Endothelial cell of umbilical vein (primary cell): ENCODE measurements at regions of chr3 and their contacts with region 1.

Region 1: GRCh38 chr3:160163229-160163878 is 61.9 kb upstream of the C3orf80 start:
- DNase-seq: peak; percentile 46
- H3K4me3 ChIP-seq: no peak overlapping the region
- H3K27ac ChIP-seq: no peak overlapping the region
- H3K4me1 ChIP-seq: no peaks in the 10 kb centered on the region
- H3K27me3 ChIP-seq: no peaks in the 10 kb centered on the region
- CTCF ChIP-seq: peak in 1 of 2 donors; percentile 8
- POLR2A ChIP-seq: no peak

Region 2: GRCh38 chr3:160012108-160012507 is 151.2 kb before region 1 on chr3:
- CTCF ChIA-PET with region 1: no interaction called
- POLR2A ChIA-PET with region 1: no interaction called
- dilution Hi-C with region 1: no loop called
- intact Hi-C with region 1: no loop called
- DNase-seq: no peak
- H3K4me3 ChIP-seq: no peak overlapping the region
- H3K27ac ChIP-seq: no peak overlapping the region
- H3K4me1 ChIP-seq: no peaks in the 10 kb centered on the region
- H3K27me3 ChIP-seq: peaks cover 0 to 3% of the 10 kb centered on the region in 2 experiments
- CTCF ChIP-seq: no peak
- POLR2A ChIP-seq: no peak

Region 3: GRCh38 chr3:160174621-160175020 is 11.3 kb after region 1 on chr3:
- CTCF ChIA-PET with region 1: interaction called, 20 read pairs
- POLR2A ChIA-PET with region 1: no interaction called
- dilution Hi-C with region 1: no loop called
- intact Hi-C with region 1: no loop called
- DNase-seq: no peak
- H3K4me3 ChIP-seq: no peak overlapping the region
- H3K27ac ChIP-seq: no peak overlapping the region
- H3K4me1 ChIP-seq: no peaks in the 10 kb centered on the region
- H3K27me3 ChIP-seq: no peaks in the 10 kb centered on the region
- CTCF ChIP-seq: no peak
- POLR2A ChIP-seq: no peak

Region 4: DNA sequence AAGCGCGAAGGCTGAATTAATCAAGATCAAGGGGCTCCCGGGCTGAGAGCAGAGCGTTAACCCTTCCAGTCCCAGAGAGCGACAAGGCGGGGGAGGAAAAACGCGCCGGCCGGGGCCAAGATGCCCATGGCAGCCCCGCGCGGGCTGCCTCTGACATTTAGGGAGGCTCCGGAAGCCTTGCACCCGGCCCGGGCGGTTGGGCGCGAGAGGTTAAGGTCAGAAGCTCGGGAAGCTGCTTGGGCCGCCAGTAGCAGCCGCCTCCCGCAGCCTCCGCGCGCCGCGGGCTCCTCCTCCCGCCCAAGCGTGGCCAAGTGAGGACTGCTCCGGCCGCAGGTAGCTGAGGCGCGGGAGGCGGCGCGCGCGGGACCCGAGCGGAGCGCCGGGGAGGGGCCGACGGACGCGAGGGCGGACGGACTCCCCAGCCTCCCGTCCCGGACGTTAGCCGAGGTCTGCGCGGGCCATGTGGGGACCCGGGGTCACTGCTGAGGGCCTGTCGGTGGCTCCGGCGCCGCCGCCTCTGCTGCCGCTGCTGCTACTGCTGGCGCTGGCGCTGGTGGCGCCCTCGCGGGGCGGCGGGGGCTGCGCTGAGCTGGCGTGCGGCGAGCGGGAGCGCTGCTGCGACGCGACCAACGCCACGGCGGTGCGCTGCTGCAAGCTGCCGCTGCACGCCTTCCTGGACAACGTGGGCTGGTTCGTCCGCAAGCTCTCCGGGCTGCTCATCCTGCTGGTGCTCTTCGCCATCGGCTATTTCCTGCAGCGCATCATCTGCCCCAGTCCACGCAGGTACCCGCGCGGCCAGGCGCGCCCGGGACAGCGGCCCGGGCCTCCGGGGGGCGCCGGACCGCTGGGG is 62.0 kb after region 1 on chr3 and contains the start of gene C3orf80:
- CTCF ChIA-PET with region 1: interaction called, 9 read pairs
- POLR2A ChIA-PET with region 1: no interaction called
- dilution Hi-C with region 1: no loop called
- intact Hi-C with region 1: loop called (anchors 5 kb)
- DNase-seq: peak; percentile 57
- H3K4me3 ChIP-seq: peak within 1 kb of the TSS; percentile 6 to 43 (median 40)
- H3K27ac ChIP-seq: no peak within 1 kb of the TSS
- H3K4me1 ChIP-seq: peaks cover 7% of the 10 kb centered on the region
- H3K27me3 ChIP-seq: peaks cover 26 to 39% of the 10 kb centered on the region in 2 experiments
- CTCF ChIP-seq: peak in 1 of 2 donors; percentile 3
- POLR2A ChIP-seq: no peak
- total RNA-seq, gene C3orf80: not detected in 2 replicates

Region 5: DNA sequence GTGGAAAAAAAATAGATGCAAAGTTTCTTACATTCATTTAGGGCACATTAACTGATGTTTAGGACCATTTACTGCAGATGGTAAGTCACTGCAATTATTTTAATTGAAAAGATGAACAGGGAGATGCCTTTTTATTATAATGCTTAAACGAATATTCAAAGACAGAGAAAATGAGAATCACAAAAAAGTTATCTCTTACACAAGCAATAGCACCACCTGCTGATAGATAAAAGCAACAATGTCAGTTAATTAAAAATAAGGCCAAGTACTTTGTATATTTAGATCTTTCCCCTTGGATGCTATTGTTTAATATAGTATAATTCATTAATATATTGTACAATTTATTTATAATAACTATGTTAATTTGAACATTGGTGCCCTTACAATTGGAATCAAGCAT is 179.8 kb after region 1 on chr3:
- CTCF ChIA-PET with region 1: interaction called, 55 read pairs
- POLR2A ChIA-PET with region 1: no interaction called
- dilution Hi-C with region 1: no loop called
- intact Hi-C with region 1: loop called (anchors 1 kb)
- DNase-seq: peak; percentile 23
- H3K4me3 ChIP-seq: no peak overlapping the region
- H3K27ac ChIP-seq: no peak overlapping the region
- H3K4me1 ChIP-seq: no peaks in the 10 kb centered on the region
- H3K27me3 ChIP-seq: no peaks in the 10 kb centered on the region
- CTCF ChIP-seq: peak in 1 of 2 donors; percentile 9
- POLR2A ChIP-seq: no peak

Region 6: GRCh38 chr3:160486459-160486869 is 323.1 kb after region 1 on chr3:
- CTCF ChIA-PET with region 1: interaction called, 24 read pairs
- POLR2A ChIA-PET with region 1: interaction called, 5 read pairs
- dilution Hi-C with region 1: no loop called
- intact Hi-C with region 1: loop called (anchors 1 kb)
- DNase-seq: peak; percentile 44
- H3K4me3 ChIP-seq: no peak overlapping the region
- H3K27ac ChIP-seq: no peak overlapping the region
- H3K4me1 ChIP-seq: peaks cover 5% of the 10 kb centered on the region
- H3K27me3 ChIP-seq: no peaks in the 10 kb centered on the region
- CTCF ChIP-seq: peak; percentile 30 to 36
- POLR2A ChIP-seq: no peak